HAP-1 (cell line): ENCODE measurements at regions of chr10 and their contacts with region 1.

Region 1: DNA sequence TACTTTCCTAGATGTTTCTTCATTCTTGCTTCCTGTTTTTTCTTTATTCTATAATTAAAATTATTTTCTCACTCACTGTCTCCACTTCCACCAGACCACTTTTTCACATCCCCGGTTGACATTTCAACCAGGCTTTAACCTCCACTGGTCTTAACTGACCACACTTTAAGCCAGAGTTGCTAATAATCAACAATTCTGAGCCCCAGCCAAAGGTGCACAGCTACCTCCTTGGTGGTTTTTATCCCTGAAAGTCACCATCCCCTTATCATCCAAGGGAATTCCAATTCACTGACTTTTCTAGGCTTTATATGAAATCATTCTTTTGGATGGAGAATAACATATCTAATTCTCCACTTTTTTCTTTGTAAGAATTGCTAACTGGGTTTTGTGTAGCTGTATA is 138.9 kb downstream of the FRMD4A start:
- DNase-seq: no peak
- H3K4me3 ChIP-seq: no peak overlapping the region
- H3K4me1 ChIP-seq: no peaks in the 10 kb centered on the region
- H3K27me3 ChIP-seq: peaks cover 15% of the 10 kb centered on the region

Region 2: GRCh38 chr10:13340626-13341376 is 851.1 kb before region 1 on chr10:
- in situ Hi-C with region 1: no loop called
- DNase-seq: no peak
- H3K4me3 ChIP-seq: no peak overlapping the region
- H3K4me1 ChIP-seq: peaks cover 23% of the 10 kb centered on the region
- H3K27me3 ChIP-seq: no peaks in the 10 kb centered on the region

Region 3: DNA sequence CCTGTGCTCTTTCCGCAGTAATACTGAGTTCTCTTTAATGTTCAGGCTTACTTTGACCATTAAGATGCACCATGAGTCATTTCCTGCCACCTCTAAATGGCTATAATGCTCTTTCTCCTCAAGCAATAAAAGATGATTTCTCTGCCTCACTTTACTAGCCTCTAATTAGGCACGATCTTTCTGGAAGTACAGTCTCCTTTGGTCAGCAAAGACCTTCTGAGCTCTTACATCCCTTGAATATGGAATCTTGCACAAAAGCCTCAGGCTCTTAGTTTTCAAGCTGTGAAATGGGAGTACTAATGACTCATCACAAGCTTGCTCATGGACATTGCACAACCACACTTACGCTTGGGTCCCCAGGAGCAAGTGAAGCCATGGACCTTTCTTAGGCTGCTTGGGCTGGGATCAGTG is 52.9 kb after region 1 on chr10:
- in situ Hi-C with region 1: no loop called
- DNase-seq: no peak
- H3K4me3 ChIP-seq: no peak overlapping the region
- H3K4me1 ChIP-seq: no peaks in the 10 kb centered on the region
- H3K27me3 ChIP-seq: no peaks in the 10 kb centered on the region

Region 4: GRCh38 chr10:14478604-14479003 is 286.7 kb after region 1 on chr10:
- in situ Hi-C with region 1: loop called (anchors 10 kb)
- DNase-seq: peak; percentile 39 to 61
- H3K4me3 ChIP-seq: no peak overlapping the region
- H3K4me1 ChIP-seq: no peaks in the 10 kb centered on the region
- H3K27me3 ChIP-seq: peaks cover 31% of the 10 kb centered on the region